ENCODE measurements at regions of chr7 and their contacts with region 1.

Region 1: GRCh38 chr7:155344600-155345433 is 47.1 kb downstream of the INSIG1 start:
- DNase-seq: peak; percentile 84 to 89
- H3K4me3 ChIP-seq: peak overlapping the region; percentile 34 to 44 (median 43)
- H3K27ac ChIP-seq: no peak overlapping the region
- H3K4me1 ChIP-seq: peaks cover 10 to 13% (median 11%) of the 10 kb centered on the region in 4 donors
- H3K27me3 ChIP-seq: peaks cover 0 to 38% (median 6%) of the 10 kb centered on the region in 3 donors
- CTCF ChIP-seq: peak in 5 of 7 experiments; percentile 58 to 99 (median 95)
- EP300 ChIP-seq: no peak
- POLR2A ChIP-seq: no peak

Region 2: DNA sequence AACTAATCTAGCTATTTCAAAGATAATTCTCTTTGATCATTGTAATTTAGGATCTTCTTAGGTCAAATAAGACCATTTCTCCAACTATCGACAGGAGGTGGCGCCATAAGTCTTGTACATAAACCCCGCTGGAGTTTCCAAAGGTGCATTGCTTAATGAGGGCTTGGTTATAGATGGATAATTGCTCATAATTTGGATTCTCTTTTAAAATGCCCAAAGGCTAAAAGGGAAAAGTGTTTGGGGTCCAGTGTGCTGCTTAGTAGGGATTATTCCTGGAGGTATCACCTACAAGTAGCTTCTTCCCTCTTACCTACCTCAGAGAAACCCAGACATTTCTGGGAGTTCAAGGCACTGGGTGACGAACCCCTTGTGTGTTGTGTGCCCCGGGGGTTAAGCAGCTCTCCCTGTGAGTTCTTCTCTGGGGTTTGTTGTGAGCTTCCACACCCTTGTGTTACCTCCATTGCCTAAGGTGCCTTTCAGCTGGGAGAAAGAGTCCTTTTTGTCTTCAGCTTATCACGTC is 417.1 kb before region 1 on chr7:
- intact Hi-C with region 1: loop called (anchors 5 kb)
- DNase-seq: peak; percentile 88 to 94
- H3K4me3 ChIP-seq: peak overlapping the region; percentile 58 to 62 (median 60)
- H3K27ac ChIP-seq: peak overlapping the region; percentile 84 to 96 (median 93)
- H3K4me1 ChIP-seq: peaks cover 5 to 31% (median 19%) of the 10 kb centered on the region in 4 donors
- H3K27me3 ChIP-seq: no peaks in the 10 kb centered on the region
- CTCF ChIP-seq: peak in 5 of 7 experiments; percentile 32 to 65 (median 60)
- EP300 ChIP-seq: no peak
- POLR2A ChIP-seq: no peak

Region 3: DNA sequence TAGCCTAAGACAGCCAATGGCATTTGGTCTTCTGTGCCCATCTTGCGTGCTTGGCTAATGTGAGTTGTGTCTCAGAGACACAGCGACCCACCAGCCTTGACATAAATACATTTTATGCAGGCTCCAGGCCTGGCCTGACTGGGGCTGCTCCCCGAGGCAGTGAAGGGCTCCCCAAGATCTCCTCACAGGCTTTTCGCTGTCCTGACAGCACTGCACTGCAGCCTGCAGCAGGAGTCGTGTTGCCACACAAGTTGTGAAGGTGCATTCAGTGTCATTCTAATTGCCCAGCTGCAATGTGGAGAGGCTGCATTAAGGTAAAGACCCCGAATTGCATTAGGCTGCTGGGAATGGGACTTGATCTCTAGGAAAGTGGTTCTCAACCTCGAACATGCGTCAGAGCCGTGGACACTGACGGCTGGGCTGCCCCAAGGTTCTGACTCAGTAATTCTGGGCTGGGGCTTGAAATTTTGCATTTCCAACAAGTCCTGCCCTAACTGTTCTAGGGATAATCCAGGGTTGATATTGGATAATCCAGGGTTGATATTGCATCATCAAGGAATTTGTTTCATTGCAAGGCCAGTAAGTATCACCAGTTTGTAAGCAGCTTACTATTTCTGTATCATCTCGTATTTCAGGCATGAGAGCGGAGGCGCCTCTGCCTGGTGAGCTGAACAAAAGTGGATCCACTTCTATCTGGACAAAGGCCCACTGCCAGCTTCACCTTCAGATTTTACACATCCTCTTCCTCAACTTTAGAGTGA is 155.8 kb before region 1 on chr7:
- intact Hi-C with region 1: loop called (anchors 5 kb)
- DNase-seq: no peak
- H3K4me3 ChIP-seq: no peak overlapping the region
- H3K27ac ChIP-seq: peak overlapping the region in 1 of 5 donors; percentile 12
- H3K4me1 ChIP-seq: peaks cover 0 to 8% (median 2%) of the 10 kb centered on the region in 4 donors
- H3K27me3 ChIP-seq: peaks cover 0 to 38% (median 0%) of the 10 kb centered on the region in 3 donors
- CTCF ChIP-seq: no peak
- EP300 ChIP-seq: no peak
- POLR2A ChIP-seq: no peak